Endothelial cell of umbilical vein (primary cell): ENCODE measurements at regions of chr19 and their contacts with region 1.

Region 1: GRCh38 chr19:47600246-47601179 is 8.4 kb upstream of the BICRA start:
- DNase-seq: peak; percentile 99
- H3K4me3 ChIP-seq: peak overlapping the region; percentile 53 to 74 (median 66)
- H3K27ac ChIP-seq: peak overlapping the region; percentile 67
- H3K4me1 ChIP-seq: peaks cover 29% of the 10 kb centered on the region
- H3K27me3 ChIP-seq: no peaks in the 10 kb centered on the region
- CTCF ChIP-seq: no peak
- POLR2A ChIP-seq: peak; percentile 92

Region 2: DNA sequence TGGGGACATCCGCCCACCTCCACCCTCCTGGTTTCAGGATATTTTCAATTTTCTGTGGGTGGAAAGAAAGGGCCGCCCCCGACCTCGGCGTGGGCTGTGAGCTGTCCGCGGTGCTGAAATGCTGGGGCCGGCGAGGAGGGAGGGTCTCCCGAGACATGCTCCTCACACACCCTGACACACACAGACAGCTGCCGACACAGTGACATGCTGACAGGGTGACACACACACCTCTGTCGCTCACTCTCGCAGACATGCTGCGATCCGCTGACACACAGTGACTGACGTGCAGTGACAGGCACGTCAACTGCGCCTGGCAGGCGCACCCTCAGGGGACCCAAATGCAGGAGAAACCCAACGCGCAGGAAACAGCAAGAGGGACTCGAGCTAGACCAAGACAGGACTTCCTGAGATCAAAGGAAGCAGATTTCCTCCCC is 156.1 kb before region 1 on chr19:
- CTCF ChIA-PET with region 1: no interaction called
- POLR2A ChIA-PET with region 1: no interaction called
- dilution Hi-C with region 1: no loop called
- intact Hi-C with region 1: no loop called
- DNase-seq: no peak
- H3K4me3 ChIP-seq: no peak overlapping the region
- H3K27ac ChIP-seq: no peak overlapping the region
- H3K4me1 ChIP-seq: no peaks in the 10 kb centered on the region
- H3K27me3 ChIP-seq: peaks cover 24 to 30% of the 10 kb centered on the region in 2 experiments
- CTCF ChIP-seq: no peak
- POLR2A ChIP-seq: no peak

Region 3: GRCh38 chr19:47613165-47614020 is 12.9 kb after region 1 on chr19:
- CTCF ChIA-PET with region 1: interaction called, 8 read pairs
- POLR2A ChIA-PET with region 1: interaction called, 7 read pairs
- dilution Hi-C with region 1: no loop called
- intact Hi-C with region 1: loop called (anchors 1 kb)
- DNase-seq: peak; percentile 76
- H3K4me3 ChIP-seq: no peak overlapping the region
- H3K27ac ChIP-seq: peak overlapping the region; percentile 66
- H3K4me1 ChIP-seq: peaks cover 28% of the 10 kb centered on the region
- H3K27me3 ChIP-seq: no peaks in the 10 kb centered on the region
- CTCF ChIP-seq: no peak
- POLR2A ChIP-seq: no peak